ENCODE measurements at regions of chr3 and their contacts with region 1.

Region 1: GRCh38 chr3:71226565-71227269 is 356.8 kb downstream of the FOXP1 start:
- DNase-seq: peak; percentile 34 to 89 (median 65)
- ATAC-seq: peak; percentile 86
- H3K4me3 ChIP-seq: peak overlapping the region; percentile 48
- H3K4me3 Mint-ChIP-seq: peak overlapping the region; percentile 51 to 85 (median 79)
- H3K27ac ChIP-seq: peak overlapping the region; percentile 59
- H3K27ac Mint-ChIP-seq: peak overlapping the region; percentile 85 to 97 (median 90)
- H3K4me1 ChIP-seq: peaks cover 21 to 64% of the 10 kb centered on the region in 2 donors
- H3K4me1 Mint-ChIP-seq: peaks cover 30 to 91% (median 88%) of the 10 kb centered on the region in 7 donors
- H3K27me3 ChIP-seq: no peaks in the 10 kb centered on the region
- H3K27me3 Mint-ChIP-seq: peaks cover 0 to 52% (median 0%) of the 10 kb centered on the region in 5 donors

Region 2: DNA sequence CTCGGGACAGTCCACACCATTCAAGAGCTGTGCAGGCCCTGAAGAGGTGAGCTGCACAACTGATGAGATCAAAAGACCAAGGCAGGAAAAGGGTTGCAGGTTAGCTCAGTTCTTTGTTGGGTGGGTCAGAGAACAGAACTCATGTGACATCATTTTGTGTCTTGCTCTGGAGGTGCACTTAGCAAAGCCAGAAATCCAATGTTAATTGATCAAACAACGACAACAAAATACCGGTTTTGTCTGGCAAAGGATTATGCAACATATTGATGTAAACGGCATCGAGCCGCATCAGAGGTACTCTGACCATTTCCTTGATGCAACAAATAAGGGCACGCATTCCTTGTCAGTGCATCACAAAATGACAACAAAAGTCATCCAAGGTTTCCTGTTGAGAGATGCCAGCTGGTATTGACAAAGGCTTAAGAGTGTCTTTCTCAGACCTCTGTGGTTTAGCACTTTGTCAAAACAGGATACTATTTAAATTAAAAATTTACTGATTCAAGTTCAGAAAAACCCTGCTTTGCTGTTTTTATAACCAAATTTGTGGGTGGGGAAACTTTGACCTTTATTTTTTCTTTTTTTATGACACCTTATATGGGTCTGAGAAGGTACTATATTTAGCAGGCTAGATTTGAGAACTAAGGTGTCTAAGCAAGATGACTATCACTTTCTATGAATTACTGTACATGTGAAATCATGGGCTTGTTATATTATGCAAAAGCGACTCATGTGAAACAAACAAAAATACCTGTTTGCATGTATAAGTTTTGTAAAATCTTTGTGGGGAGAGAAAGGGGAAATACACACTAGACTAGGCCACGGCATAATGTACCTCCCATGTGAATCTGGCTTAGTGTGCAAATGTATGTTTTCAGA is 139.3 kb before region 1 on chr3:
- CTCF ChIA-PET with region 1: no interaction called
- POLR2A ChIA-PET with region 1: no interaction called
- intact Hi-C with region 1: loop called in 1 of 2 experiments (anchors 1 kb)
- DNase-seq: peak in 8 of 9 donors; percentile 39 to 76 (median 58)
- ATAC-seq: peak; percentile 79
- H3K4me3 ChIP-seq: peak overlapping the region; percentile 7
- H3K4me3 Mint-ChIP-seq: peak overlapping the region; percentile 39 to 78 (median 70)
- H3K27ac ChIP-seq: peak overlapping the region; percentile 42
- H3K27ac Mint-ChIP-seq: peak overlapping the region; percentile 43 to 98 (median 92)
- H3K4me1 ChIP-seq: peaks cover 34 to 69% of the 10 kb centered on the region in 2 donors
- H3K4me1 Mint-ChIP-seq: peaks cover 61 to 94% (median 89%) of the 10 kb centered on the region in 7 donors
- H3K27me3 ChIP-seq: no peaks in the 10 kb centered on the region
- H3K27me3 Mint-ChIP-seq: no peaks in the 10 kb centered on the region

Region 3: GRCh38 chr3:71149959-71150954 is 76.5 kb before region 1 on chr3:
- CTCF ChIA-PET with region 1: no interaction called
- POLR2A ChIA-PET with region 1: no interaction called
- intact Hi-C with region 1: no loop called
- DNase-seq: peak in 2 of 9 donors; percentile 22 to 24
- ATAC-seq: peak; percentile 65
- H3K4me3 ChIP-seq: no peak overlapping the region
- H3K4me3 Mint-ChIP-seq: peak overlapping the region in 7 of 10 donors; percentile 15 to 58 (median 45)
- H3K27ac ChIP-seq: peak overlapping the region; percentile 42
- H3K27ac Mint-ChIP-seq: peak overlapping the region in 8 of 9 donors; percentile 40 to 93 (median 86)
- H3K4me1 ChIP-seq: peaks cover 0 to 29% of the 10 kb centered on the region in 2 donors
- H3K4me1 Mint-ChIP-seq: peaks cover 14 to 92% (median 85%) of the 10 kb centered on the region in 7 donors
- H3K27me3 ChIP-seq: no peaks in the 10 kb centered on the region
- H3K27me3 Mint-ChIP-seq: peaks cover 0 to 2% (median 0%) of the 10 kb centered on the region in 5 donors

Region 4: DNA sequence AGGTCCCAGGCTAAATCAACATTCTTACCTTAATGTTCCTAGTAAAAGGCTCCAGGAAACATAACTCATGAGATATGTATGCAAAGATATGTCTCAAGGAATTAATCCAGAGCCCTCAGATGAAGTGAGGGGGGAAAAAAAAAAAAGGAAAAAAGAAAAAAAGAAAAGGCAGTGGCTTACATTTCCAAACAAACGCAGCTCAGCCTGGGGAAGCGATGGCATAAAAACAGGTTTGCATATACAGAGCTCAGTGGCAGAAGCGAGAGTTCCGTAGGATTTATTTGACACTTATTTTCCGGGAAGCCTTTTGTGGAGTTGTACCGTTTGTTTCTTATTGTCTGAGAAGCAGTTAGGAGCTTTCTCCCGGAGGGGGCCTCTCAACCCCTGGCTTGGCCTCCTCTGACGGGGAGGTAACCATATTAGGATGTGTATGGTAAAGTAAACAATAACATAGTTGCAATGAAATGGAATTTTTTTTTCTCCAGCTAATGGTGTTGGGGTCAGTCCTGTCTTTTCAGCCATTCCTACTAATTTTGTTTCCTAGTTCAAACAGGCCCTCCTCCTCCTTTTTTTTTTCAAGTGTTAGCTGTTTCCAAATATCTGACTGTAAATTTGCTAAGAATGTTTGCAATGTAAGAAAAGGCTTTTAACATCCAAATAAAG is 18.2 kb after region 1 on chr3:
- CTCF ChIA-PET with region 1: interaction called, 3 read pairs
- POLR2A ChIA-PET with region 1: no interaction called
- intact Hi-C with region 1: loop called in 1 of 2 experiments (anchors 2 kb)
- DNase-seq: no peak
- ATAC-seq: no peak
- H3K4me3 ChIP-seq: no peak overlapping the region
- H3K4me3 Mint-ChIP-seq: peak overlapping the region in 2 of 10 donors; percentile 19 to 22
- H3K27ac ChIP-seq: no peak overlapping the region
- H3K27ac Mint-ChIP-seq: peak overlapping the region in 8 of 9 donors; percentile 14 to 90 (median 48)
- H3K4me1 ChIP-seq: peaks cover 0 to 23% of the 10 kb centered on the region in 2 donors
- H3K4me1 Mint-ChIP-seq: peaks cover 2 to 94% (median 90%) of the 10 kb centered on the region in 7 donors
- H3K27me3 ChIP-seq: no peaks in the 10 kb centered on the region
- H3K27me3 Mint-ChIP-seq: peaks cover 0 to 4% (median 0%) of the 10 kb centered on the region in 5 donors

Region 5: GRCh38 chr3:71264840-71265239 is 38.1 kb after region 1 on chr3:
- CTCF ChIA-PET with region 1: no interaction called
- POLR2A ChIA-PET with region 1: interaction called, 4 read pairs
- intact Hi-C with region 1: loop called in 1 of 2 experiments (anchors 2 kb)
- DNase-seq: no peak
- ATAC-seq: peak; percentile 36
- H3K4me3 ChIP-seq: no peak overlapping the region
- H3K4me3 Mint-ChIP-seq: peak overlapping the region in 9 of 10 donors; percentile 14 to 66 (median 55)
- H3K27ac ChIP-seq: peak overlapping the region; percentile 50
- H3K27ac Mint-ChIP-seq: peak overlapping the region in 8 of 9 donors; percentile 69 to 84 (median 74)
- H3K4me1 ChIP-seq: peaks cover 0 to 33% of the 10 kb centered on the region in 2 donors
- H3K4me1 Mint-ChIP-seq: peaks cover 25 to 87% (median 78%) of the 10 kb centered on the region in 7 donors
- H3K27me3 ChIP-seq: no peaks in the 10 kb centered on the region
- H3K27me3 Mint-ChIP-seq: no peaks in the 10 kb centered on the region

Region 6: GRCh38 chr3:71360764-71361163 is 134.0 kb after region 1 on chr3:
- CTCF ChIA-PET with region 1: no interaction called
- POLR2A ChIA-PET with region 1: no interaction called
- intact Hi-C with region 1: no loop called
- DNase-seq: peak in 4 of 9 donors; percentile 29 to 55 (median 40)
- ATAC-seq: peak; percentile 69
- H3K4me3 ChIP-seq: peak overlapping the region; percentile 1
- H3K4me3 Mint-ChIP-seq: peak overlapping the region; percentile 14 to 84 (median 76)
- H3K27ac ChIP-seq: peak overlapping the region; percentile 66
- H3K27ac Mint-ChIP-seq: peak overlapping the region; percentile 52 to 97 (median 90)
- H3K4me1 ChIP-seq: peaks cover 14 to 79% of the 10 kb centered on the region in 2 donors
- H3K4me1 Mint-ChIP-seq: peaks cover 25 to 97% (median 93%) of the 10 kb centered on the region in 7 donors
- H3K27me3 ChIP-seq: no peaks in the 10 kb centered on the region
- H3K27me3 Mint-ChIP-seq: peaks cover 0 to 16% (median 0%) of the 10 kb centered on the region in 5 donors

Region 7: GRCh38 chr3:71389911-71390573 is 163.3 kb after region 1 on chr3:
- CTCF ChIA-PET with region 1: no interaction called
- POLR2A ChIA-PET with region 1: no interaction called
- intact Hi-C with region 1: loop called (anchors 5 to 10 kb)
- DNase-seq: peak in 8 of 9 donors; percentile 25 to 67 (median 49)
- ATAC-seq: peak; percentile 55
- H3K4me3 ChIP-seq: peak overlapping the region; percentile 51
- H3K4me3 Mint-ChIP-seq: peak overlapping the region; percentile 68 to 88 (median 83)
- H3K27ac ChIP-seq: peak overlapping the region; percentile 81
- H3K27ac Mint-ChIP-seq: peak overlapping the region; percentile 75 to 99 (median 90)
- H3K4me1 ChIP-seq: peaks cover 29 to 74% of the 10 kb centered on the region in 2 donors
- H3K4me1 Mint-ChIP-seq: peaks cover 27 to 93% (median 83%) of the 10 kb centered on the region in 7 donors
- H3K27me3 ChIP-seq: no peaks in the 10 kb centered on the region
- H3K27me3 Mint-ChIP-seq: peaks cover 0 to 22% (median 0%) of the 10 kb centered on the region in 5 donors

Region 8: DNA sequence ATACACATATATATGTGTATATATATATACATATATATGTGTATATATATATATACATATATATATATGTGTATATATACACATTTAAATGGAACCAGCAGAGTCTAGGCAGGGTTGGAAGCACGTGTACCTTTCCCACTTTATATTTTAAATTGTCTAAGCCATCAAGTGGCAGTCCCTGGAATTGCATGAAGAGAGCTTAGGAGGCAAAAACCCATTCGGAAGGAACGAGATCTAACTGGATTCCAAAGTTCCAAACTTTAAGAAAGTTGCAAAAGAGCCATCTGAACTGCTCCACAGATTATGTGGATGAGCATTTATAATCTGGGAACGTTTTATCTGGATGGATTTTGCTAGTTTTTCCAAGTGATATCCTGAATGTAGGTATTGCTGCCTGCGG is 170.3 kb after region 1 on chr3:
- CTCF ChIA-PET with region 1: no interaction called
- POLR2A ChIA-PET with region 1: no interaction called
- intact Hi-C with region 1: loop called (anchors 5 to 10 kb)
- DNase-seq: no peak
- ATAC-seq: no peak
- H3K4me3 ChIP-seq: peak overlapping the region; percentile 3
- H3K4me3 Mint-ChIP-seq: peak overlapping the region in 9 of 10 donors; percentile 54 to 80 (median 73)
- H3K27ac ChIP-seq: peak overlapping the region; percentile 86
- H3K27ac Mint-ChIP-seq: peak overlapping the region in 8 of 9 donors; percentile 81 to 98 (median 92)
- H3K4me1 ChIP-seq: peaks cover 39 to 79% of the 10 kb centered on the region in 2 donors
- H3K4me1 Mint-ChIP-seq: peaks cover 23 to 95% (median 84%) of the 10 kb centered on the region in 7 donors
- H3K27me3 ChIP-seq: no peaks in the 10 kb centered on the region
- H3K27me3 Mint-ChIP-seq: peaks cover 0 to 52% (median 0%) of the 10 kb centered on the region in 5 donors

Region 9: GRCh38 chr3:71495708-71496472 is 269.2 kb after region 1 on chr3:
- CTCF ChIA-PET with region 1: no interaction called
- POLR2A ChIA-PET with region 1: interaction called, 3 read pairs
- intact Hi-C with region 1: loop called in 1 of 2 experiments (anchors 5 kb)
- DNase-seq: peak in 2 of 9 donors; percentile 24 to 34
- ATAC-seq: no peak
- H3K4me3 ChIP-seq: peak overlapping the region; percentile 33
- H3K4me3 Mint-ChIP-seq: peak overlapping the region; percentile 52 to 98 (median 80)
- H3K27ac ChIP-seq: peak overlapping the region; percentile 89
- H3K27ac Mint-ChIP-seq: peak overlapping the region; percentile 77 to 100 (median 98)
- H3K4me1 ChIP-seq: peaks cover 43 to 71% of the 10 kb centered on the region in 2 donors
- H3K4me1 Mint-ChIP-seq: peaks cover 54 to 90% (median 85%) of the 10 kb centered on the region in 7 donors
- H3K27me3 ChIP-seq: no peaks in the 10 kb centered on the region
- H3K27me3 Mint-ChIP-seq: no peaks in the 10 kb centered on the region

Measured in naive thymus-derived CD4-positive, alpha-beta T cell (primary cell).